ENCODE measurements at regions of chr2 and their contacts with region 1.

Region 1: DNA sequence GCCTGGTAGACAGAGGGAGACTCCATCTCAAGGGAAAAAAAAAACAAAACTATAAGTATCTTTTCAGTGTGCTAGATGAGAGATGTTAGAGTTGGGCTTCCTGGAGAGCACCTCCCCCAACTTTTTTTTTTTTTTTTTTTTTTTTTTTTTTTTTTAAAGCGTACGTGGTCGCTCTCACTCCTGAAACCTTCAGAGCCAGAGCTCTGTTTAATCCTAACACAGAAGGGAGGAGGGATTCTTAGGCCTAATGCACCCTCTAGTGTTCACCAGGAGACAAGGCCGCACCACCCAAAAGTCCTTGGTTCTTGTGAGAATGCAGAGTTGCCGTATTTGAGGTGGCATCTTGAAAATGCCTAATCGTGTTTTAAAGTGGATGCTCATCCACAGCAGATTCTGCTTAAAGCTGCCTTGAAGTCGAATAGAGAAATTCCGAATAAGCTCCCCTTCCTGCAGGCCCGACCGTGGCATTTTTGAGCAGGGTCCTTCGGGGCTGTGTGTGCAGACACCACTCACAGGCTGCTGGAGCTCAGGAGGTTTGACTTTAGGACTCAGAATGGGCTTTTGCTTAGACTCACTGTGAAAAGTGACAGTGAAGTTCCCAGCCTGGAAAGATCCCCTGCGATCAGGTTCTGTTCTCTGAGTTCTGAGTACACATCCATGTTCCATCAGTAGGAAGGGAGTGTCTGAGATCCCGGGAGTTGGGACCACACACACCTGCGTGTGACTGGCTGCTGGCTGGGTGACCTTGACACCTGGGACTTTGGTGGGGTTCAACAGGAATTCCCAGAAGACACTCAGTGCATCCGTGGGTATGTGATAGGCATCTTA is 252.6 kb downstream of the AGAP1 start:
- DNase-seq: peak; percentile 68
- H3K4me3 ChIP-seq: no peak overlapping the region
- H3K27ac ChIP-seq: peak overlapping the region in 1 of 4 donors; percentile 51
- H3K4me1 ChIP-seq: peaks cover 0 to 10% (median 3%) of the 10 kb centered on the region in 4 donors
- H3K27me3 ChIP-seq: no peaks in the 10 kb centered on the region
- CTCF ChIP-seq: peak; percentile 71 to 79 (median 76)
- EP300 ChIP-seq: no peak
- POLR2A ChIP-seq: no peak

Region 2: GRCh38 chr2:235493775-235494715 is 252.4 kb before region 1 on chr2 and contains the start of gene AGAP1:
- in situ Hi-C with region 1: loop called in 1 of 4 experiments (anchors 10 kb)
- intact Hi-C with region 1: no loop called
- DNase-seq: peak; percentile 91
- H3K4me3 ChIP-seq: peak within 1 kb of the TSS; percentile 71 to 81 (median 76)
- H3K27ac ChIP-seq: peak within 1 kb of the TSS; percentile 84 to 90 (median 89)
- H3K4me1 ChIP-seq: peaks cover 5 to 33% (median 28%) of the 10 kb centered on the region in 4 donors
- H3K27me3 ChIP-seq: no peaks in the 10 kb centered on the region
- CTCF ChIP-seq: no peak
- EP300 ChIP-seq: no peak
- POLR2A ChIP-seq: no peak
- total RNA-seq, gene AGAP1: 56.1 to 96.9 (median 71.2) TPM

Region 3: DNA sequence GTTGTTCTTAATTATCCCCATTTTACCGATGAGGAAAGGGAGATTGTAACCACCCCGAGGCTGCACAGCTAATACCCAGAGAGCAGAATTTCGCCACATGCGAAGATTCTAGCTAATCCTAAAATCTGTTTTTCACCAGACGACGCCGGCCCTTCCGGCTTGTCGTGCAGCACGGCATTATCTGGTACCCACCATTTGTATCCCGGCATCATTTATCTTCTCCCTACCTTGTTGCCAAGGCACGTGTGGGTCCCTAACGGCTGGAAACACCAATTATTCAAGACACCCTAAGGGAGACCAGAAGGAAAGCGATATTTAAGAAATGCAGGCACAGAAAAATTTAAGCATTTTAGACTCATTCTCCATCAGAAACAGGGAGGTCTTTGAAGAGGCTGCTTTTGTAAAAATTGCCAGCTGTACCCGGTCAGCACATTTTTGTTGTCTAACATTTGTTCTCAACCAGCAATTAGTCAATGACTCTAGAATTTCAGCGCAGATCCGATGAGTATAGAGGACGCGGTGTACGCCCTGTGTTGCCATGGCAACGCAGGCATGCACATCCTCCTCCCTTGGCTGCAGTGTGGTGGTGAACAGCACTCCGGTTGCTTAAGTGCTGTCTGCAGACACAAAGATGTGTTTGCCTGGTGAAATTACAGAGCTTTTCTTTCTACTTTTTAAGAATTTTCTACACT is 141.0 kb before region 1 on chr2:
- in situ Hi-C with region 1: loop called (anchors 10 kb)
- intact Hi-C with region 1: no loop called
- DNase-seq: peak; percentile 54
- H3K4me3 ChIP-seq: no peak overlapping the region
- H3K27ac ChIP-seq: peak overlapping the region; percentile 18 to 50 (median 36)
- H3K4me1 ChIP-seq: peaks cover 0 to 6% (median under 1%) of the 10 kb centered on the region in 4 donors
- H3K27me3 ChIP-seq: no peaks in the 10 kb centered on the region
- CTCF ChIP-seq: no peak
- EP300 ChIP-seq: peak; percentile 53
- POLR2A ChIP-seq: no peak

Measured in transverse colon (tissue), 4 donors.